AG04450 (cell line): ENCODE measurements at regions of chr6 and their contacts with region 1.

Region 1: DNA sequence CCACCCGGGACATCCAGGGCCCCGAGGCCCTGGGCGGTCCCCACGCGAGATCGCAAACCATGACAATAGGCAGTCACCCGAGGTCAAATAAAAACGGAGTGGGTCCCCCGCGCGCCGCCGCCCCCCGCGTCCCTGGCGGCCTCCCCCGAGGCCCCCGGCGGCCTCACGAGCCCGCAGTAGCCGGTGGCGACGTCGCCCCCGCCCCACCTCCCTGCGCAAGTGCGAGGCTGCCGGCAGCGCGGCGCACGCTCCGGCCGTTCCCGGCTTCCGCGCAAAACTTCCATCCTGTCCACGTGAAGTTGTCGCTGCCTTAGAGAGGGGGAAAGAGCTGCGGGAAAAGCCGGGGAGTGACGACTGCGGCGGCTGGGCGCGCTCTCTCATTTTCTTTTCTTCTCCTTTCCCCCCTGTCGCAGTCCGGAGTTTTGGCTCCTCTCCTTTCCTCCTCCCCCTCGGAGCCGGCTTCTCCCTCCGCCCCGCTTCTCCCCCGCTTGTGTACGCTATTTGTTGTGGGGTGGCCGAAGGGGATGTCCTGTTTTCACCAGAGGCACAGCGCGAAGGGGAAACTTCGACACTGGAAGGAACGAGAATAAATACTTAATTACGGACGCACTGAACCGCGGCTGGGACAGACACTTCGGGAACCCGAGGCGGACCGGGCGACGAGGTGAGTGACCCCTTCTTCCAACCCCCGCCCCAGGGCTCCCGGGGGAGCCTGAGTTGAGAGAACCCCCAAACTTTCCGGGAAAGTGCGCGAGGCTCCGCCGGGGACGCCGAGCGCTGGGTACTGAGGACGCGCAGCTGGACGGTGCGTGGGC is at the start of gene EYA4:
- DNase-seq: no peak
- H3K4me3 ChIP-seq: peak within 1 kb of the TSS; percentile 85
- H3K27ac ChIP-seq: peak within 1 kb of the TSS; percentile 85
- H3K27me3 ChIP-seq: no peaks in the 10 kb centered on the region
- CTCF ChIP-seq: 0 out of 2 replicates have a peak, but pooled peaks have one; percentile 6
- polyA plus RNA-seq, gene EYA4: 30.9 and 37.8 TPM in 2 replicates

Region 2: GRCh38 chr6:133463789-133464188 is 222.5 kb after region 1 on chr6:
- CTCF ChIA-PET with region 1: interaction called, 11 read pairs
- POLR2A ChIA-PET with region 1: no interaction called
- DNase-seq: no peak
- H3K4me3 ChIP-seq: no peak overlapping the region
- H3K27ac ChIP-seq: no peak overlapping the region
- H3K27me3 ChIP-seq: no peaks in the 10 kb centered on the region
- CTCF ChIP-seq: no peak